ENCODE measurements at regions of chr10 and their contacts with region 1.

Region 1: DNA sequence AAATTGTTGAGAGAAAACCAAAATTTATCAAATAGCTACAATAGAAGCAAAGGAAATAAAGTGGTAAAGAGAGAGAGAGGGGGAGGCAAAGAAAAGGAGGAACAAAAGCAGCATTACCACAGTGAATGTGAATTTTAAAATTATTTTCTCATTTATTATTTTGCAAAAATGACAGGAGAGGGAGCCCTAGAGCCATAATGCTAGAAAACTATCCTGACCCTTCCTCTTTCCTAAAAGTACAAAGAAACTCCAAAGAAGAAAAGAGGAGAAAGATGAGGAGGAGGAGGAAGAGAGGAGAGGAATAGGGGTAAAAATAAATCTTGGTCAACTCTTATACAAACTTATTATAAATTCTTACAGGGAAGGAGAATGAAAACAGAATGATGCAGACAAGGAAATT is 921.5 kb downstream of the NRG3 start:
- DNase-seq: no peak
- ATAC-seq: no peak
- H3K4me3 ChIP-seq: no peak overlapping the region
- H3K27ac ChIP-seq: no peak overlapping the region
- H3K4me1 ChIP-seq: no peaks in the 10 kb centered on the region
- H3K27me3 ChIP-seq: no peaks in the 10 kb centered on the region

Region 2: GRCh38 chr10:82826132-82826531 is 29.6 kb after region 1 on chr10:
- intact Hi-C with region 1: no loop called
- DNase-seq: no peak
- ATAC-seq: no peak
- H3K4me3 ChIP-seq: no peak overlapping the region
- H3K27ac ChIP-seq: no peak overlapping the region
- H3K4me1 ChIP-seq: no peaks in the 10 kb centered on the region
- H3K27me3 ChIP-seq: no peaks in the 10 kb centered on the region

Region 3: DNA sequence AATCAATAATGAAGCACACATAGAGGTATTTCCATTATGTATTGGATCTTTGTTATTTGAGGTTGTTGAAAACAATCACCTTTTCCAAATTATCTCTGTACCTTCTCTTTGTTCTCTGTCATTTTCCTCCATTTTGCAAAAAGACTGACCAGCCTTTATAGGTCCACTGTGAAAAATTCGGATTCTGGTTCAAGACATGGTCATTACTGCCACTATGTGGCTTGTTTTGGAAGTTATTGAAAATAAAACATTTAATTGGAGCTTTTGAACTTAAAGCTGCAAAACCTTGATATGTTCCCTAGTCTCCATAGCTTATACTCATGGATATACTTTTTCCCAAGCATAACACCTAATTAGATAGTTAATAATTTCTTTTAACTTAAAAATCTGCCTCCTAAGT is 172.9 kb after region 1 on chr10:
- intact Hi-C with region 1: loop called (anchors 5 to 10 kb)
- DNase-seq: no peak
- ATAC-seq: no peak
- H3K4me3 ChIP-seq: no peak overlapping the region
- H3K27ac ChIP-seq: no peak overlapping the region
- H3K4me1 ChIP-seq: no peaks in the 10 kb centered on the region
- H3K27me3 ChIP-seq: no peaks in the 10 kb centered on the region

Measured in aorta (tissue), 5 donors.